Activated naive CD4-positive, alpha-beta T cell treated with anti-CD3 and anti-CD28 coated beads for 36 hours (primary cell): ENCODE measurements at regions of chr1 and their contacts with region 1.

Region 1: GRCh38 chr1:213987927-213988506 is at the start of gene PROX1:
- DNase-seq: peak; percentile 73
- H3K4me3 Mint-ChIP-seq: peak within 1 kb of the TSS; percentile 83
- H3K27ac Mint-ChIP-seq: no peak within 1 kb of the TSS
- H3K4me1 Mint-ChIP-seq: peaks cover 44% of the 10 kb centered on the region
- H3K27me3 Mint-ChIP-seq: peaks cover 82% of the 10 kb centered on the region
- total RNA-seq, gene PROX1: 0.10 to 0.12 TPM

Region 2: DNA sequence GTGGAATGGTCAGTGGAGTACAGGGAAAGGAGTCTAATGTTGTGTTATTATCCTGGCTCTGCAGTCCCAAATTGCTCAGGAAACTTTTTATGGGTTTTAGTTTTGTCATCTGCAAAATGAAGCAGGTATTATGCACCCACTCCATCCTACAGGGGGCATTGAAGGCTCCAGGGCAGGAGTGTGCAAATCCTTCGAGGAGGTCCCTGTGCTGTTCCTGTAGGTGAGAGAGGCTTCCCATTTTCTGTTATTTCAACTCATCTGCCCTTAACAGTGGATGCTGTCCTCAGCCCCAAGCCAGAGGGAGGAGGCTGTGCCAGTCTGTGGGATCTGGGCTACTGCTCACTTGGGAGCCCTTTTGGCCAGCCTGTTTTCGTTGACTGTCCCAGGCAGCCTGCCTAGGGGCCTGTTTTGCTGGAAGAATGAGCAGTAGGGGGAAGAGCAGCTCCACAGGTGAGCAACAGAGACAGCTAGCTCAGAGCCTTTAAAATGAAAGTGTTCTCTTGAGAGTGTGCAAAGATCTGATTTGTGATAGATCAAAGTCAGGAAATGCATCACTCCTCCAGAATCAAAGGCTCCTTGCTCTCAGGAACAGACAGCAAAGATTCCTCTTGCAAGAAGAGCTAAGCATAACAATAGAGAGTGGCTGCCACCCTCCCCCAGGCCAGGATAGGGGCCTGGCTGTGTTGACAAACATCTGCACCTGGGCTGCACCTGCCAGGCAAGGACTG is 317.9 kb before region 1 on chr1:
- CTCF ChIA-PET with region 1: no interaction called
- intact Hi-C with region 1: loop called (anchors 2 kb)
- DNase-seq: peak; percentile 49
- H3K4me3 Mint-ChIP-seq: no peak overlapping the region
- H3K27ac Mint-ChIP-seq: no peak overlapping the region
- H3K4me1 Mint-ChIP-seq: peaks cover 14% of the 10 kb centered on the region
- H3K27me3 Mint-ChIP-seq: no peaks in the 10 kb centered on the region

Region 3: DNA sequence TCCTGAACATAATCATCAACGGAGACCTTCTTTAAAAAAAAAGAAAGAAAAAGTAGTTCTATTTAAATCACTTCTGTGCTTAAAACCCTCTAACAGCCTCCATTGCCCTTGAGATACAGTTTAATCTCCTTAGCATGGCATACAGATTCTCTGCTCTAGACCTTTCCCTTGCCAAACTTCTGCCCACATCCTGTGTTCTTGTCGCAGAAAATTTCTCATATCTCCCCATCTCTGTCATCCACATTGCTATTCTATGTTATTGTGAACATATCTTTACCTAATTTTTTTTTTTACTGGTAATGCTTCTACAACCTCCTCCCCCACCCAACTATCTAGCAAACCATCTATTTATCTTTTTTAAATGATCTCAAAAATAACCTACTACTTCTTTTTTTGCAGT is 135.9 kb before region 1 on chr1:
- CTCF ChIA-PET with region 1: no interaction called
- intact Hi-C with region 1: loop called (anchors 5 kb)
- DNase-seq: peak; percentile 54
- H3K4me3 Mint-ChIP-seq: no peak overlapping the region
- H3K27ac Mint-ChIP-seq: no peak overlapping the region
- H3K4me1 Mint-ChIP-seq: peaks cover 25% of the 10 kb centered on the region
- H3K27me3 Mint-ChIP-seq: no peaks in the 10 kb centered on the region

Region 4: GRCh38 chr1:214123061-214123784 is 135.2 kb after region 1 on chr1:
- CTCF ChIA-PET with region 1: interaction called, 5 read pairs
- intact Hi-C with region 1: loop called (anchors 2 kb)
- DNase-seq: peak; percentile 61
- H3K4me3 Mint-ChIP-seq: no peak overlapping the region
- H3K27ac Mint-ChIP-seq: no peak overlapping the region
- H3K4me1 Mint-ChIP-seq: peaks cover 6% of the 10 kb centered on the region
- H3K27me3 Mint-ChIP-seq: peaks cover 5% of the 10 kb centered on the region

Region 5: DNA sequence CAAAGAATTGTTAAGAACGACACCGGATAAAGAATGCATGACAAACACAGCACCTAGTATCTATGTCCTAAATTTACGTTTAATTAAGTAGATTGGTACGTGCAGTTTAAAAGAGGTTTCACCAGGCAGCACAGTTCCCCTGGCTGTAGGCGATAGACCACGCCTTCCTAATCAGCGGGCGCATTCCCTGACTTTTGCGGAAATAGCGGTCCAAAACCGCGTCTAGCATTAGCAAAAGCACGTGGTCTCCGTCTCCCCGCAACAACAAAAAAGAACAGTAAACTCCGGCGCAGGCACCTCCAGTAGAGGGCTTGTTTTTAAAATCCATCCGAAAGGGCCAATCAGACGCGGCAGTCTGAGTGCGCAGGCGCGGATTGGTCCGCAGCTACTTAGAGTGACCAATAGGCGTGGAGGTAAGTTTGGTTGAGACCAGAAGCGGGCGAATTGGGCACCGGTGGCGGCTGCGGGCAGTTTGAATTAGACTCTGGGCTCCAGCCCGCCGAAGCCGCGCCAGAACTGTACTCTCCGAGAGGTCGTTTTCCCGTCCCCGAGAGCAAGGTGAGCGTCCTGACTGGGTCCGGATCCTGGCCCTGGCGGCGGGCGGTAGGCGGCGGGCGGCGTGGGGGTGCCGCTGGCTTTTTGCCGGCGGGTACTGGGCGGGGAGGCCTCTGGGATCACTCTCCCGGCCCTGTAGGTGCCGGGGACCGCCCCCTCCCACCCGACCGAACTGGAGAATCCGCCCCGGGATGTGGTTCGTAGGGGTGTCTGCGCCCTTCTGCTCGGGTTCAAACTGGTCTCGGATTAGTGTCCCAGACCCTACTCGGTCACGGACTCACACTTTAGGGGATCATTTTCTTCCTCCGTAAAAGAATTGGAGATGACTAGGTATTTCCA is 615.0 kb after region 1 on chr1 and contains the start of gene CENPF:
- CTCF ChIA-PET with region 1: no interaction called
- intact Hi-C with region 1: loop called (anchors 5 kb)
- DNase-seq: peak; percentile 97
- H3K4me3 Mint-ChIP-seq: peak within 1 kb of the TSS; percentile 97
- H3K27ac Mint-ChIP-seq: peak within 1 kb of the TSS; percentile 90
- H3K4me1 Mint-ChIP-seq: peaks cover 8% of the 10 kb centered on the region
- H3K27me3 Mint-ChIP-seq: no peaks in the 10 kb centered on the region
- total RNA-seq, gene CENPF: 116 to 128 TPM